ENCODE measurements at regions of chr9 and their contacts with region 1.

Region 1: DNA sequence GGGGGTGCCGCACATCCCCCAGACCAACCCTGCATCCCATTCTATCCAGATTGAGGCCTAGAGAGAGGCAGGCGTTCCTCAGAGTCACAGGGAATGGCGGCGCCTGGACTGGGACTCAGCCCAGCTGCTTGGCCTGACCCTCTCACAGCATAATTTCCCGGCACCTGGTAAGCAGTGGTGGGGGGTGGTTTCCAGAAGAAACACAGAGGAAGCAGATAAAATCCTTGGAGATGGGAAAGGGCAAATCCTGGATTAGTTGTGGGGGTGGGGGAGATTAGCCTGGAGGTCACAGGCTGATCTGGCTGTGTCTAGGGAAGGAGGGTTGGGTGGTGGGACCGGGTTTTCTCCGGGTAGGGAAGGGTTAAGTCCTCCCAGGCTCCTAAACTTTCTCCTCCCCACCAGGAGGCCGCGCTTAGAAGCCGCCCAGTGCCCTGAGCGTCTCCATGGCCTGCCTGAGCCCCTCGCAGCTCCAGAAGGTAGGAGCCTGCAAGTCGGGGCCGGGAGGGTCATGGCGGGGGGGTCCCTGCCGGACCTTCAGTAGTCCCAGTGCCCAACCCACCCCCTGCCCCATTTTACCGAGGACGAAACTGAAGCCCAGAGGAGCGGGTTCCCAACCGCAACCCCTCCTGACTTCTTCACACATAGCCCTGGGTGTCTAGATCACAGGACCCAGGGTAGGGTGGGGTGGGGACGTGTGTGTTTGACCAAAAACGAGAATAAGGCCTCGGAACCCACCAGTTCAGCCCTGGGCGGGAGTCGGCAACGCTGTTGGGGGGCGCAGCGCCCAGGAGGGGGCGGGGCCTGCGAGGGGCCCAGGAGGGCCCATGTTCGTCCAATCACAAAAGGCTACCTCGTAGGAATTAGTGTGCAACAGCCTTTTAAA is 1.3 kb downstream of the PHYHD1 start:
- DNase-seq: peak in 1 of 10 donors; percentile 75

Region 2: DNA sequence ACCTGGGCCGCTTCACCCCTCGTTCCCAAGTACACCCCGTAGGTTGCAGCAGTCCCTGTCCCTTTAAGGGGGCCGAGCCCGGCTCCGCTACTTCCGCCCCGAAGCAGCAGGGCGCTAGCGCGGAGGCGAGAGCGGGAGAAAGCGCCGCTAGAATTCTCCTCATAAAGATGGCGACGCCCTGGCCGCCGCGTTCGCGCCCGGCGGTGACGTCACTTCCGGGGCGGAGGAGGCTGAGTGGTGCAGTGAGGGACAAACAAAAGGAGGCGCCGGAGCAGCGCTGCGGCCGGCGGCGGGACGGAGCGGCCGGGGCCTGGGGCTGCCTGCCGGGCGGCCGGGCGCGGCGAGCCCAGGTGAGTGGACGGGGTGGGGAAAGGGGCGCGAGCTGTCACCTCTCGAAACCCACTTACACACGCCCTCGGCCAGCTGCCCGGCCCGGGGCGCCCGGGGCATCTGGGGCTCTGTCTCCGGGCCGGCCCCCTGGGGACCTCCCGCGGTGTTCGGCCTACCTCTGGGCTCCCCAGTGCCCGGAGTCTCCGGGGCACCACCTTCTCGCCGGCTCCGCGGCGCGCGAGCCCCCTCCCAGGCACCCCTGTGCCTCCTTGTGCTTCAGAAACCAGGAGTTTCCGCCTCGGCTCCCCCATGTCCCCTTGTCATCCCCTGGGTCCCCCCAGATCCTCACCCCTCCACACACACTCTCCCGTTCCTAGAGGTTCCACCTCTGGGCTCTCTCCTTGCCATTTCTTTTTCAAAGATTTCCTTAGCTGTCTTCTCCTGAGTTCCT is 40.0 kb before region 1 on chr9 and contains the starts of genes KYAT1 and LRRC8A:
- intact Hi-C with region 1: loop called (anchors 5 kb)
- DNase-seq: peak; percentile 96 to 100 (median 98)